ENCODE measurements at regions of chr5 and their contacts with region 1.

Region 1: GRCh38 chr5:170315154-170315553 is 17.6 kb upstream of the LCP2 start:
- DNase-seq: peak; percentile 94
- H3K4me3 ChIP-seq: no peak overlapping the region
- H3K27ac ChIP-seq: peak overlapping the region; percentile 30 to 79 (median 70)
- H3K4me1 ChIP-seq: peaks cover 0 to 62% (median 51%) of the 10 kb centered on the region in 4 donors
- H3K27me3 ChIP-seq: no peaks in the 10 kb centered on the region
- CTCF ChIP-seq: no peak
- EP300 ChIP-seq: peak in 3 of 4 donors; percentile 36 to 95 (median 63)
- POLR2A ChIP-seq: no peak

Region 2: DNA sequence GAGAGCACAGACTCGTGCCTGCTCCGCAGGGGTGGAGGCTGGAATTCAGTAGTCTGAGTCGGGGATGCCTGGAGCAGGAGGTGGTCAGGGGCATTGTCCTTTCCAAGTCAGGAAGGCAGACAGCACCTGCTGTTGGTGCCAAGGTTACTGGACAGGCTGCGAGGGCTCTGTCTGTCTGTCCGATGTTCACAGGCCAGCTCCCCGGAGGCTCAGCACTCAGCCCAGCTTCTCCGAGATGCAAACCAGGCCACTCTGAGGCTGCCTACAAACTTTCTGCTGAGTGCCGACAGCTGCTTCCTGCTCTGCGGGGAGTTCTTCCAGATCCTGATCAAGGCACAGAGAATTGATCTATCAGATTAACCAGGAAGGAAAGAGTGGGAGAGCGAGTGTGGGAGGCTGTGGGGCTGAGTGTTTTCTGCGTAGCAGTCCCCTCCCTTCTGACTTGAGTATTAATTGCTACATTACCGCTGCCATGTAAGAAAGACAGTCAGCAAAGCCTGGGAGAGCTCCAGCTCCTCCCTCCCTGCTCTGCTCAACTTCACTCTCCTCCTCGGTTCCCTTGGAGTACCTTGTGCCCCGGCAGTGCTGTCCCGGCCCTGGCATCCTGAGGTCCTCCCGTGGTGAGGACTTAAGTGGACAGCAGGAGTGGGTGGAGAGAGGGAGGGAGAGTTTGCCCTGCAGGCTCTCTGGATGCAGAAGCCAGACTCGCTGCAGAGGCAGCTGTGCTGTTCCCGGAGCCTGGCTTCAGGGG is 38.0 kb after region 1 on chr5:
- intact Hi-C with region 1: loop called (anchors 5 kb)
- DNase-seq: peak; percentile 80
- H3K4me3 ChIP-seq: peak overlapping the region in 3 of 4 donors; percentile 4 to 40 (median 35)
- H3K27ac ChIP-seq: peak overlapping the region in 3 of 4 donors; percentile 70 to 82 (median 79)
- H3K4me1 ChIP-seq: peaks cover 0 to 51% (median 34%) of the 10 kb centered on the region in 4 donors
- H3K27me3 ChIP-seq: no peaks in the 10 kb centered on the region
- CTCF ChIP-seq: no peak
- EP300 ChIP-seq: peak in 1 of 4 donors; percentile 2
- POLR2A ChIP-seq: no peak

Region 3: DNA sequence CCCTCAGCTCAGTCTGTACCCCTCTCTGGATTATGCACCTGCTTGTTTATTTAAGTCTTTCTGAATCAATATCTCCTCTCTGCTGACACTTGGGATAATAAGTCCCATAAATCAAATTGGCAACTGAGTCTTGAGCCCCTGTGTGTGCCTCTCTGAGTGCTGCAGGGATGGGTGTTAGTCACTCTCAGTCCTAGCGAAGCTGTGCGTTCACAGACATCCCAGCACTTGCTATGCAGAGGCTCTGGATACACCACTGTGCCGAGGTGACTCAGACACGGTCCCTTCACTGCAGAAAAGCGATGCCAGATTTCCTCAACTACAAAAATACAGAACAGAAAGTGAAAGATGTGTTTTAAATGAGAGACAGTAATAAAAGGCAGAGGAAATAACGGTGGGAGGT is 78.1 kb after region 1 on chr5:
- intact Hi-C with region 1: loop called (anchors 1 kb)
- DNase-seq: no peak
- H3K4me3 ChIP-seq: no peak overlapping the region
- H3K27ac ChIP-seq: peak overlapping the region in 3 of 4 donors; percentile 89 to 95 (median 94)
- H3K4me1 ChIP-seq: peaks cover 0 to 60% (median 47%) of the 10 kb centered on the region in 4 donors
- H3K27me3 ChIP-seq: no peaks in the 10 kb centered on the region
- CTCF ChIP-seq: no peak
- EP300 ChIP-seq: no peak
- POLR2A ChIP-seq: no peak

Measured in sigmoid colon (tissue), 7 donors.